ENCODE measurements at regions of chr10 and their contacts with region 1.

Region 1: GRCh38 chr10:32367793-32368453 is 21.0 kb upstream of the EPC1 start:
- DNase-seq: peak; percentile 88
- H3K4me3 Mint-ChIP-seq: peak overlapping the region; percentile 41
- H3K27ac Mint-ChIP-seq: peak overlapping the region; percentile 59
- H3K4me1 Mint-ChIP-seq: peaks cover 65% of the 10 kb centered on the region
- H3K27me3 Mint-ChIP-seq: no peaks in the 10 kb centered on the region

Region 2: GRCh38 chr10:32190890-32191491 is 176.9 kb before region 1 on chr10:
- CTCF ChIA-PET with region 1: interaction called, 3 read pairs
- intact Hi-C with region 1: loop called (anchors 1 kb)
- DNase-seq: no peak
- H3K4me3 Mint-ChIP-seq: no peak overlapping the region
- H3K27ac Mint-ChIP-seq: no peak overlapping the region
- H3K4me1 Mint-ChIP-seq: peaks cover 2% of the 10 kb centered on the region
- H3K27me3 Mint-ChIP-seq: no peaks in the 10 kb centered on the region

Region 3: DNA sequence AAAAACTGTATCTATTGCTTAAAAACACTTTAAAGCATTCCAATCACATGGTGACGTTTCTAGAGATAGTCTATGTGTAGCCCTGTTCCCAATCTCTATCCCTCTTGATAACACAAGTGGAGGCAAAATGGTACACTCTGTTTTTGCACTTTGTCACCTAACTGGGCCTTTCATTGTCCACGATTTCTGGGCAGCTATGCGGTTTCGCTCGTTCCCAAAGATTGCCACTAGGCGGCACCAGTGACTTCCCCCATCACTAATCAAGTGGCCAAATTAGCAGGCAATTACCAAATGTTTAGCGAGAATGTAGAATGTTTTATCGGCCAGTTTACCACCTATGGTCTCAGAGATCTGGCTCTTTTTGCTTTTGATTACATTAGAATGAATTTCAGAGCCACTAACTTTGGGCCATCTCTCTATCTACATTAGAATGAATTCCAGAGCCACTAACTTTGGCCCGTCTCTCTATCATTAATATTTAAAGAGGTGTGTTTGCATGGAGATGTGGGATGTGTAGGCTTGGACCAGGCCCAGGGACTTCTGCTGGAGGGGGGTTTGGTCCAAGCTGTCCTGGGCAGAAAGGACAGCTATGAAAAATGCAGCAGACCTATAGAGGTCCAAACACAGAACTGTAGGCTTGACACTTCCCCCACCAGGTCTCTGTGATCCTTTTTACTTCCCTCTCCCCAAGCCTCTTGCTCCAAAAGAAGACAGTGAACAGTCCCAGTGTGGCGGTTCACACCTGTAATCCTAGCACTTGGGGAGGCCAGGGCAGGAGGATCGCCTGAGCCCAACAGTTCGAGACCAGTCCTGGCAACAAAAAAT is 111.1 kb before region 1 on chr10:
- CTCF ChIA-PET with region 1: interaction called, 29 read pairs
- intact Hi-C with region 1: loop called (anchors 1 kb)
- DNase-seq: peak; percentile 81
- H3K4me3 Mint-ChIP-seq: no peak overlapping the region
- H3K27ac Mint-ChIP-seq: no peak overlapping the region
- H3K4me1 Mint-ChIP-seq: peaks cover 8% of the 10 kb centered on the region
- H3K27me3 Mint-ChIP-seq: no peaks in the 10 kb centered on the region

Region 4: DNA sequence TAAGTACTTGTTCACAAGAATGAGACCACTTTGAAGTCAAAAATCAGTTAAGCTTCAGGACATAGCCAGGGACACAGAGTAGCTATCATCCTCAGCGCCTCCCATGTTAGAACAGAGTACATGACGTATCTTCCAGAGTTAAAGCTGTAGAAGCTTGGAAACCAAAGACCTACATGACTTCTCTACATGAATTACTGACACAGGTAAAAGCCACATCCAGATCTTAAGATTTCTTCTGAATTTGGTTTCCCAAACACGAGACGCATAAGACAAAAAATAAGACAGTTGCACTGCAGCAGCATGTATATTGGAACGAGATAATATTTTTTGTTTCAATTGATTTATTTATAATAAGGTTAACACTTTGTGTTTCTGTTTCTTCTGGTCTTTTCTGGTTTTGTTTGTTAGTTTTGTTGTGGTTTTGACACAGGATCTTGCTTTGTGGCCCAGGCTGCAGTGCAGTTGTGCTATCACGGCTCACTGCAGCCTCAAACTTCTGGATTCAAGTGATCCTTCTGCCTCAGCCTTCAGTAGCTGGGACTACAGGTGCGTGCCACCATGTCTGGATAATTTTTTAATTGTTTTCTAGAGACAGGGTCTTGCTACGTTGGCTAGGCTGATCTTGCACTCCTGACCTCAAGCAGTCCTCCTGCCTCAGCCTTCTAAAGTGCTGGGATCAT is 10.7 kb before region 1 on chr10:
- CTCF ChIA-PET with region 1: interaction called, 11 read pairs
- intact Hi-C with region 1: loop called (anchors 1 kb)
- DNase-seq: peak; percentile 27
- H3K4me3 Mint-ChIP-seq: peak overlapping the region; percentile 60
- H3K27ac Mint-ChIP-seq: peak overlapping the region; percentile 33
- H3K4me1 Mint-ChIP-seq: peaks cover 58% of the 10 kb centered on the region
- H3K27me3 Mint-ChIP-seq: no peaks in the 10 kb centered on the region